ENCODE measurements at regions of chr21 and their contacts with region 1.

Region 1: GRCh38 chr21:17780539-17780938 is 38.6 kb downstream of the C21orf91 start:
- DNase-seq: peak; percentile 23
- H3K4me3 ChIP-seq: no peak overlapping the region
- H3K27ac ChIP-seq: no peak overlapping the region
- H3K4me1 ChIP-seq: peaks cover 57% of the 10 kb centered on the region
- CTCF ChIP-seq: no peak

Region 2: DNA sequence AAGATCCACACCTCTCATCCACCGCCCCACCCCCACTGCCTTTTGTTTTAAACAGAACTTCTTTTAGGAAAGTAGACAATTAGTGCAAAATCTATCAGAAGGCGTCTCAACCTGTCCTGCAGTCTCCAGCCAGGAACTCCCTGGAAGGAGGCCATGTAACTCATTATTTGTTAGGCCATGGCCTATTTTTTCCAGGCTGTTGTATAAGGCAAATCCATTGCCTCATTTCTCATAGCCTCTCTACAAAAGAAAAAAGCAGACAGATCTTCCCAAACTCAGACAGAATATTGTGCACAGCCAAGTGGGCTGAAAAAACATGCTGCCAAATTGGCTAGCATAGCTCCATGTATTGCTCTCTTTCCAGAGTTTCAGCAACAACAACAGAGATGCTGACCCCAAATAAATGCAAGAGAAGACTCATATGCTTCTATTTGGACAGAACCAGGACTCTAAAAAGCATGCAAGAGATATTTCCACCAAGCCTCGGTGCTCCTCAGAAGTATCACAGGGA is 1038.4 kb before region 1 on chr21:
- CTCF ChIA-PET with region 1: no interaction called
- POLR2A ChIA-PET with region 1: no interaction called
- intact Hi-C with region 1: no loop called
- DNase-seq: no peak
- H3K4me3 ChIP-seq: no peak overlapping the region
- H3K27ac ChIP-seq: no peak overlapping the region
- H3K4me1 ChIP-seq: no peaks in the 10 kb centered on the region
- CTCF ChIP-seq: no peak

Region 3: GRCh38 chr21:17427831-17428483 is 352.6 kb before region 1 on chr21:
- CTCF ChIA-PET with region 1: no interaction called
- POLR2A ChIA-PET with region 1: no interaction called
- intact Hi-C with region 1: loop called (anchors 5 kb)
- DNase-seq: peak; percentile 92
- H3K4me3 ChIP-seq: peak overlapping the region; percentile 50
- H3K27ac ChIP-seq: peak overlapping the region; percentile 94
- H3K4me1 ChIP-seq: peaks cover 67% of the 10 kb centered on the region
- CTCF ChIP-seq: no peak

Region 4: DNA sequence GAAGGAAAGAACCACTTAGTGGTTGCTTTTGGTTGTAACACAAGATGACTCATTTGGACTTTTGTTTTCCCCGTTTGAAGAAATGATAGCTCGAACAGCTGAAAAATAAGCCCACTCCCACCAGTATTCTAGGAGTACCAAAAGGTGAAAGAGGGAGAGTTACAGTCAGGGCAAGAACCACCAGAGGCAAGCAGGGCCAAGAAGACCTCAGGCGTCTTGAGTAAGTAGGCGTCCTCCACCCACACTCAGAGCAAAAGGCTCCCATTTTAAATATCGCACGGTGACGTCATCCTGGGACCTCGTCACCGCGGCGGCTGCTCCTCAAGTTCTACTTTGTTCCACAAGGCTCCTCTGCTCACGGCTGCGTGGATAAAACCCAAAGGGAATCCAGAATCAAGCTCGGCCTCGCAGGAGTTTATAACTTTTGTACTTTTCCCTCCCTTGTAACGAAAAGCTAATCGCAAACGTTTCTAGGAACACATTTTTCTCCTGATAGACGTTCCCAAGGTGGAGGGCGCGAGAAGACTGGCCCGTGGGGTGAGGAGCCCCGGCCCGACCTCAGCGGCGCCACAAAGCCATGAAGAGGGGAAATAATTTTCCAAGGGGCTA is 169.0 kb before region 1 on chr21:
- CTCF ChIA-PET with region 1: no interaction called
- POLR2A ChIA-PET with region 1: interaction called, 4 read pairs
- intact Hi-C with region 1: loop called (anchors 5 kb)
- DNase-seq: peak; percentile 85
- H3K4me3 ChIP-seq: peak overlapping the region; percentile 92
- H3K27ac ChIP-seq: peak overlapping the region; percentile 48
- H3K4me1 ChIP-seq: peaks cover 30% of the 10 kb centered on the region
- CTCF ChIP-seq: no peak

Region 5: DNA sequence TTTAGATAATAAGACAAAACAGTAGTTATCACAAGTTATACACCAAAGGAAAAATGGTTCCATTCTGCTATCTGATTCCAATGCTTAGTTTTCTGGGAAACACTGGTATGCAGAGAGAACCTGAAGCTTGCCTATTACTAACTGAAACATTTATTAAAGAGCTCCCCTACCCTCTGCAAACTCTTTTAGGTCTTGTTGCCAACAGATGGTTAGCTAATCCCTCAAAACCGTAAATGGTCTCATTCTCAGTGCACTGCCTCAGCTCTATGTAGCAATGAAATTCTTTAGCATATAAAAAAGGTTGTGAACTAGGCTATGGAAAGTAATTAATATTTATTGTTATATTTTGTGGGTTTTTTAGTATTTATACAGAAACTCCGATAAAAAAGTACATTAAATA is 18.3 kb after region 1 on chr21:
- CTCF ChIA-PET with region 1: interaction called, 4 read pairs
- POLR2A ChIA-PET with region 1: interaction called, 27 read pairs
- intact Hi-C with region 1: no loop called
- DNase-seq: no peak
- H3K4me3 ChIP-seq: no peak overlapping the region
- H3K27ac ChIP-seq: no peak overlapping the region
- H3K4me1 ChIP-seq: peaks cover 23% of the 10 kb centered on the region
- CTCF ChIP-seq: no peak

Region 6: GRCh38 chr21:17925000-17925610 is 144.6 kb after region 1 on chr21:
- CTCF ChIA-PET with region 1: no interaction called
- POLR2A ChIA-PET with region 1: no interaction called
- intact Hi-C with region 1: loop called (anchors 10 kb)
- DNase-seq: peak; percentile 76
- H3K4me3 ChIP-seq: no peak overlapping the region
- H3K27ac ChIP-seq: no peak overlapping the region
- H3K4me1 ChIP-seq: no peaks in the 10 kb centered on the region
- CTCF ChIP-seq: peak; percentile 94

Region 7: GRCh38 chr21:17949421-17949820 is 168.9 kb after region 1 on chr21:
- CTCF ChIA-PET with region 1: no interaction called
- POLR2A ChIA-PET with region 1: no interaction called
- intact Hi-C with region 1: no loop called
- DNase-seq: no peak
- H3K4me3 ChIP-seq: no peak overlapping the region
- H3K27ac ChIP-seq: no peak overlapping the region
- H3K4me1 ChIP-seq: no peaks in the 10 kb centered on the region
- CTCF ChIP-seq: no peak